CD4-positive, alpha-beta memory T cell (primary cell): ENCODE measurements at regions of chr10 and their contacts with region 1.

Region 1: DNA sequence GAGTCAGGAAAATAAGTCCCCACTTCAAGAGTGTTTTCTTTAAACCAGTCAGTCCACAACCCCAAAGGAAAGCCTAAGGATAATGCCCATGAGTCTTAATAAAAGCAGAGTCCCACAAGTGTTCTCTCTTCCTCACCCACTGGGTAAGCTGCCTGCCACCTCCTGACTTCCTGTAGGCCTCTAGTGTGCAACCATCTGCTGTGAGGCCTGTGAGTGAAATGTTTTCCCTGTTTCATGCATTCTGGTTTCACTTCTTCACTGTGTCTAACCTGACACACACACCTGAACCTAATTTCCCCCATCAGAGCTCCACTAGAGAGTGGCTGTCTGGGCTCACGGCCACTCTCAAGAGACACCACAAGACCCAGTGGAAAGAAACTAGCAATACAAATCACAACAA is 38.9 kb upstream of the GDF10 start:
- DNase-seq: peak; percentile 38 to 53 (median 43)
- H3K4me3 ChIP-seq: no peak overlapping the region
- H3K4me3 Mint-ChIP-seq: peak overlapping the region; percentile 34 to 83 (median 76)
- H3K27ac ChIP-seq: peak overlapping the region; percentile 51
- H3K27ac Mint-ChIP-seq: peak overlapping the region; percentile 78 to 99 (median 96)
- H3K4me1 ChIP-seq: peaks cover 90% of the 10 kb centered on the region
- H3K4me1 Mint-ChIP-seq: peaks cover 48 to 93% (median 82%) of the 10 kb centered on the region in 4 donors
- H3K27me3 ChIP-seq: no peaks in the 10 kb centered on the region
- H3K27me3 Mint-ChIP-seq: no peaks in the 10 kb centered on the region

Region 2: DNA sequence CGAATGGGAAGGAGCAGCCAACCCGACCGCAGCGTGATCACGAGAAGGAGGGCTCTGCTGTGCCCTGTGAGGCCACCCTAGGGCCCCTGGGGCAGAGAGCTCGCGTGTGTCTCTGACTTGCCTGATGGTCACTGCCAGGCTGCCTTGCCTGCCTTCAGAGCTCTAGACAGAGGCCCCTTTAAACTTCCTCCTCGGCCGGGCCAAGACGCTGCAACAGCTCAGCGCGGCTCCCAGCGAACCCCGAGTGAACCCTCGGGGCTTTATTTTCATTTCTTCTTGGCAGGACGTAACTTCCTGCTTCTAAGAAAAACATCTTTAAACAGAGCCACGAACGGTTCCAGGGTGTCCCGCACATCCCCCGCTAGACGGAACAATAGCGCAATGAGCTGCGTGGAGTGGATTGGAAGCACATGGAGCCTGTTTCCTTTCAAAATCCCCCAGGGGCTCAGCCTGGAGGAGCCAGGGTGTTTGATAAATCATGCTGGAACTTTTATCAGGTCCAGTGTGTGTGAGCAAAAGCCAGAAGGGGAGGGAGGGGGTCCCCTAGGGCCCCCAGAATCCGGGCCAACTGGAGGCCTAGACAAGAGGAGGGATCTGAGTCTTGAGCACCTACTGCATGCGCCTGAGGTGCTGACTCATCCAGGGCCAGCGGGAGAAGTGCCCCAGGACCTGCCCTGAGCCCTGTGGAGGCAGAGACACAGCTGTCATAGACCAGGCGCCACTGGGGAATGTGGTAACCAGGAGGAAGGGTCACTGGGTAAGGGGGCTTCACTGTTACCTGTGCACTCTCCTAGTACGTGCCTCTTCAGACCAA is 95.2 kb before region 1 on chr10:
- CTCF ChIA-PET with region 1: interaction called, 4 read pairs
- POLR2A ChIA-PET with region 1: interaction called, 14 read pairs
- intact Hi-C with region 1: loop called (anchors 2 kb)
- DNase-seq: peak; percentile 44 to 61 (median 51)
- H3K4me3 ChIP-seq: peak overlapping the region; percentile 32 to 64
- H3K4me3 Mint-ChIP-seq: peak overlapping the region; percentile 86 to 94 (median 88)
- H3K27ac ChIP-seq: peak overlapping the region; percentile 40
- H3K27ac Mint-ChIP-seq: peak overlapping the region; percentile 84 to 96 (median 95)
- H3K4me1 ChIP-seq: peaks cover 22% of the 10 kb centered on the region
- H3K4me1 Mint-ChIP-seq: peaks cover 12 to 23% (median 18%) of the 10 kb centered on the region in 4 donors
- H3K27me3 ChIP-seq: no peaks in the 10 kb centered on the region
- H3K27me3 Mint-ChIP-seq: no peaks in the 10 kb centered on the region

Region 3: GRCh38 chr10:47207281-47207615 is 53.9 kb before region 1 on chr10:
- CTCF ChIA-PET with region 1: interaction called, 3 read pairs
- POLR2A ChIA-PET with region 1: interaction called, 33 read pairs
- intact Hi-C with region 1: loop called (anchors 1 kb)
- DNase-seq: peak in 2 of 5 donors; percentile 7 to 28
- H3K4me3 ChIP-seq: peak overlapping the region in 1 of 2 donors; percentile 36
- H3K4me3 Mint-ChIP-seq: peak overlapping the region; percentile 61 to 82 (median 78)
- H3K27ac ChIP-seq: peak overlapping the region; percentile 22
- H3K27ac Mint-ChIP-seq: peak overlapping the region; percentile 77 to 94 (median 91)
- H3K4me1 ChIP-seq: peaks cover 60% of the 10 kb centered on the region
- H3K4me1 Mint-ChIP-seq: peaks cover 39 to 72% (median 64%) of the 10 kb centered on the region in 4 donors
- H3K27me3 ChIP-seq: no peaks in the 10 kb centered on the region
- H3K27me3 Mint-ChIP-seq: no peaks in the 10 kb centered on the region

Region 4: DNA sequence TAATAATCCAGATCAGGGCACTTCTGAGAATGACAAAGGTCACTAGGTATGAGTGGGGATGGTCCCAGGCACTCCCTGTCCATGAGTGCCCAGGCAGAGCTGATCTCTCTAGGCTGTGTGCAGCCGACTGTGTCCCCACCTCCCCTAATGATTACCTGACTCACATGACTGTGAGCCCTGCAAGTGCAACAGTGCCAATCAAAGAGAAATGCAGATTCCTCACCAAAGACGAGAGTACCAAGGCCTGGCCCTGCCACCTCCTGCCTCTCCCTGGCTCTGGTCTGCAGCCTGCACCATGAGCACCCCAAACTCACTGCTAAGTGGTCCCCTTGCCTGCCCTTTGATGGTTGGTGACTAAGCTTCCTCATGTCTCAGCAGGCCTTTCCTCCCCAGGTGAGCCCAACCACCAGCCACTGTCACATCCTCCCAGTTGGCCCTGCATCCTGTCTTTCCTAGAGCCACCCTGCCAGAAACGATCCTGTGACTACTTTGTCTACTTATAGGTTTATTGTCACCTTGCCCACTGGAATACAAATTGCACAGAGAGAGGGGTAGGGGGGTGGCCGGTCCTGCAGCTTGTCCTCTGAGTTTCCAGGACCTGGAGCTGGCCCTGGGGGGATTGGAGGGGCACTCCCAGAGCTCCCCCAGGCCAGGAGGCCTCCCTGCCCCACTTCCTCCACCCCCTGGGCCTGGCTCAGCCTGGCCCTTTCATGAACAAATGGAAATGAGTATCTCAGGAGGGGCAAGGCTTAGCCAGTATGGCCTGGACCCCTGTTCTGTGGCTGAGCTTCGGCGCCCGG is 16.4 kb after region 1 on chr10:
- CTCF ChIA-PET with region 1: interaction called, 3 read pairs
- POLR2A ChIA-PET with region 1: interaction called, 11 read pairs
- intact Hi-C with region 1: loop called (anchors 1 kb)
- DNase-seq: peak in 4 of 5 donors; percentile 19 to 74 (median 34)
- H3K4me3 ChIP-seq: no peak overlapping the region
- H3K4me3 Mint-ChIP-seq: peak overlapping the region in 5 of 8 donors; percentile 22 to 76 (median 57)
- H3K27ac ChIP-seq: no peak overlapping the region
- H3K27ac Mint-ChIP-seq: peak overlapping the region in 6 of 7 donors; percentile 7 to 86 (median 46)
- H3K4me1 ChIP-seq: peaks cover 26% of the 10 kb centered on the region
- H3K4me1 Mint-ChIP-seq: peaks cover 11 to 33% (median 22%) of the 10 kb centered on the region in 4 donors
- H3K27me3 ChIP-seq: no peaks in the 10 kb centered on the region
- H3K27me3 Mint-ChIP-seq: no peaks in the 10 kb centered on the region